CD4-positive, alpha-beta memory T cell (primary cell): ENCODE measurements at regions of chr3 and their contacts with region 1.

Region 1: GRCh38 chr3:42961633-42962032 is 17.5 kb upstream of the GASK1A start:
- DNase-seq: peak in 4 of 5 donors; percentile 28 to 40 (median 38)
- H3K4me3 ChIP-seq: no peak overlapping the region
- H3K4me3 Mint-ChIP-seq: no peak overlapping the region
- H3K27ac ChIP-seq: no peak overlapping the region
- H3K27ac Mint-ChIP-seq: peak overlapping the region in 1 of 7 donors; percentile 9
- H3K4me1 ChIP-seq: peaks cover 4% of the 10 kb centered on the region
- H3K4me1 Mint-ChIP-seq: peaks cover 10 to 16% (median 14%) of the 10 kb centered on the region in 4 donors
- H3K27me3 ChIP-seq: no peaks in the 10 kb centered on the region
- H3K27me3 Mint-ChIP-seq: peaks cover 1 to 2% of the 10 kb centered on the region in 2 donors

Region 2: GRCh38 chr3:43024181-43024885 is 62.7 kb after region 1 on chr3:
- CTCF ChIA-PET with region 1: interaction called, 12 read pairs
- POLR2A ChIA-PET with region 1: no interaction called
- intact Hi-C with region 1: no loop called
- DNase-seq: peak; percentile 66 to 70 (median 68)
- H3K4me3 ChIP-seq: peak overlapping the region in 1 of 2 donors; percentile 41
- H3K4me3 Mint-ChIP-seq: peak overlapping the region; percentile 65 to 92 (median 75)
- H3K27ac ChIP-seq: peak overlapping the region; percentile 35
- H3K27ac Mint-ChIP-seq: peak overlapping the region; percentile 57 to 95 (median 91)
- H3K4me1 ChIP-seq: peaks cover 70% of the 10 kb centered on the region
- H3K4me1 Mint-ChIP-seq: peaks cover 56 to 74% (median 65%) of the 10 kb centered on the region in 4 donors
- H3K27me3 ChIP-seq: no peaks in the 10 kb centered on the region
- H3K27me3 Mint-ChIP-seq: no peaks in the 10 kb centered on the region

Region 3: GRCh38 chr3:43076857-43077256 is 115.2 kb after region 1 on chr3:
- CTCF ChIA-PET with region 1: interaction called, 102 read pairs
- POLR2A ChIA-PET with region 1: no interaction called
- intact Hi-C with region 1: no loop called
- DNase-seq: no peak
- H3K4me3 ChIP-seq: no peak overlapping the region
- H3K4me3 Mint-ChIP-seq: no peak overlapping the region
- H3K27ac ChIP-seq: no peak overlapping the region
- H3K27ac Mint-ChIP-seq: peak overlapping the region in 1 of 7 donors; percentile 7
- H3K4me1 ChIP-seq: no peaks in the 10 kb centered on the region
- H3K4me1 Mint-ChIP-seq: peaks cover 0 to 6% (median 0%) of the 10 kb centered on the region in 4 donors
- H3K27me3 ChIP-seq: no peaks in the 10 kb centered on the region
- H3K27me3 Mint-ChIP-seq: no peaks in the 10 kb centered on the region

Region 4: DNA sequence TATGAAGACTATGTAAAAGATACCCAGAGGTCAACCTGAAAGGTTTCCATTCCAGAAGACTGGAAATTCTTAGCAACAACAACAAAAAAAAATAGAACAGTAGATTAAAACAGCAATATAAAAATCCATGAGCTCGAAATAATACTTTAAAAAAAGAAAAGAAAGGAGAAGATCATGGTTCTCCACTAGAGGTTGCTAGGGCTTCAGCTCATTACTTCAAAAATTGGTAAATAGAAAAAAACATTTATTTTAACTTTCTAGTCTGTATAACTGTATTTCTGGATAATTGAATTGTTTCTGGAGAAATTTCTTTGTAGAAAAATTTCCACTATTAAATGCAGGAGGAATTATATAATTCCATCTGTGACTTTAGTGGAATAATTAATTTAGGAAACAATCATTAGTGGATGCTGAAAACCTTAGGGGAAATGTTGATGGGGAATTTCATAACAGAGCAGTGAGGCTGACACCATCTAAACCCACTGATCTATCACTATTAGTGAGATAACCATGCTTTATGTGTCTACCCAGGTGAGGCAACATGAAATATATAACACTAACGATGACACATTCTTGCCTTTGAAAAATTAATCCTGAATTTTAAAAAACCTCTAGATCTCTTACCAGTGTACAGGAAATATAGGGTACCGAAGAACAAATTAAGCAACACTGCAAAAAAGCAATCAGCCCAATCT is 262.2 kb after region 1 on chr3:
- CTCF ChIA-PET with region 1: interaction called, 15 read pairs
- POLR2A ChIA-PET with region 1: no interaction called
- intact Hi-C with region 1: no loop called
- DNase-seq: peak in 4 of 5 donors; percentile 14 to 30 (median 24)
- H3K4me3 ChIP-seq: no peak overlapping the region
- H3K4me3 Mint-ChIP-seq: peak overlapping the region in 2 of 8 donors; percentile 18 to 55
- H3K27ac ChIP-seq: no peak overlapping the region
- H3K27ac Mint-ChIP-seq: peak overlapping the region in 3 of 7 donors; percentile 6 to 52 (median 38)
- H3K4me1 ChIP-seq: peaks cover 43% of the 10 kb centered on the region
- H3K4me1 Mint-ChIP-seq: peaks cover 35 to 53% (median 48%) of the 10 kb centered on the region in 4 donors
- H3K27me3 ChIP-seq: no peaks in the 10 kb centered on the region
- H3K27me3 Mint-ChIP-seq: no peaks in the 10 kb centered on the region

Region 5: DNA sequence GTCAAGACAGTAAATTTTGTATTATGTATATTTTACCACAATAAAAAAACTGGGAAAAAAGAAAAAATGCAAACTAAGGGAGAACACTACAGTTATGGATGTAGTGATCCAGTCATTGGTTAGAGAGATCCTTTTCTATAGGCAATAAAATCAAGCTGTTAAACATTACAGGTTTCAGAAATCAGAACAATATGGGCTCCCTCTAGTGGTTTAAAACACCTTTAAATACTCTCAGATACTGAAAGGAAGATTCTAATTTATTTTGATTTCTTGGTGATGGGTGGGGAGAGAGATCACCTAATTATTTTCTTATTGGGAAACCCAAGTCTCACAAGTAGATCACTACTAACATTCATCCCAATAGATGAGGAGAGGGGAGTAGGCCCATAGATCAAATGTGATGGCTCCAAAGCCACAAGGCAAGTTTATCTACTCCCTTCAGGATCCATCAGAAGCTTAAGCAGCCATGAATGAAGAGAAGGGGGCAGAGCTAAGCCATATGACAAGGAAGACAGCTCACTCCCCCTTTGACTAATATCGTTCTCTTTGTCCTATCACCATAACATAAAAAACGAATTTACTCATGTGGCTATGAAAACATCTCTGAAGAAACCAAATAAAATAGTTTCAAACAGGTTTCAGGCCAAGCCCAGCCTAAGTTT is 541.6 kb after region 1 on chr3:
- CTCF ChIA-PET with region 1: interaction called, 45 read pairs
- POLR2A ChIA-PET with region 1: interaction called, 3 read pairs
- intact Hi-C with region 1: loop called (anchors 1 kb)
- DNase-seq: peak in 4 of 5 donors; percentile 54 to 61 (median 60)
- H3K4me3 ChIP-seq: no peak overlapping the region
- H3K4me3 Mint-ChIP-seq: no peak overlapping the region
- H3K27ac ChIP-seq: no peak overlapping the region
- H3K27ac Mint-ChIP-seq: peak overlapping the region in 5 of 7 donors; percentile 24 to 88 (median 63)
- H3K4me1 ChIP-seq: peaks cover 39% of the 10 kb centered on the region
- H3K4me1 Mint-ChIP-seq: peaks cover 32 to 52% (median 41%) of the 10 kb centered on the region in 4 donors
- H3K27me3 ChIP-seq: no peaks in the 10 kb centered on the region
- H3K27me3 Mint-ChIP-seq: no peaks in the 10 kb centered on the region